Posterior cingulate gyrus (tissue), 11 donors: ENCODE measurements at regions of chr21 and their contacts with region 1.

Region 1: GRCh38 chr21:27564684-27565301 is 597.9 kb upstream of the ADAMTS5 start:
- DNase-seq: peak in 6 of 10 donors; percentile 28 to 88 (median 47)

Region 2: DNA sequence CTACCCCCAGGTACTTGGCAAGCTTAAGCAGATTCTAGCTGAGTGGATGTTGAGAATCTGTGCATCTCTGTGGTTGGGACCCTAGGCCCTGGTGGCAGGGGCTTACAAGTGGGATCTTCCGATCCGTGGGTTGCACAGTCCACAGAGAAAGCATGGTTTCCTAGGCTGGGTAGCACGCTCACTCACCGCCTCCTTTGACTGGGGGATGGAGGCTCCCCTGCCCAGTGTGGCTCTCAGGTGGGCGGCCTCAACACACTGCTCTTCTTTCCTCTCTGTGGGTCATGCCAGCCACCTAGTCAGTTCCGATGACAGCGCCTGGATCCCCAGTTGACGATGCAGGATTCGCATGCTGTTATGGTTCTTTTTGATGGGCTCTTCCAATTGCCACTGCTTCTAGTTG is 41.6 kb after region 1 on chr21:
- intact Hi-C with region 1: no loop called
- DNase-seq: peak in 1 of 10 donors; percentile 49

Region 3: DNA sequence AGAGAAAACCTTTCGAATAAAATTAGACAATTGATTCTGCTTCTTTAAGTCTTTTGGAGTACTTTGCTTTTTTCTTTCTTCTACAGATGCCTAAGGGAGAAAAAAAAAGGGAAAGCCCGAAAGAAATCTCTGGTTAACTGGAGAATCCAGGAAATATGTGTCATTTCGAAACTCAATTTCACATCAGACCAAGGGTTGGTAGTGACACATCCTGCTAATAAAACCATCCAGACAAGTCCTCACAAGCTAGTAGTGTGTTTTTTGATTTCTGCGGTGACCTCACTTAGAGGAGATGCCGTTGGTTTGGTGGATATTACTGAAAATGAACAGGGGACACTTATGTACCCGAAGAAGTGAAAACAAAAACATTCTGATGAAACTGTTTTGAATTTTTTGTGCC is 128.6 kb after region 1 on chr21:
- intact Hi-C with region 1: loop called (anchors 10 kb)
- DNase-seq: no peak

Region 4: GRCh38 chr21:28485301-28486022 is 920.7 kb after region 1 on chr21:
- intact Hi-C with region 1: no loop called
- DNase-seq: no peak